BJ (cell line): ENCODE measurements at regions of chr3 and their contacts with region 1.

Region 1: GRCh38 chr3:87350364-87351199 is 74.2 kb upstream of the POU1F1 start:
- DNase-seq: no peak
- H3K4me3 ChIP-seq: no peak overlapping the region
- H3K27me3 ChIP-seq: no peaks in the 10 kb centered on the region
- CTCF ChIP-seq: peak; percentile 83

Region 2: DNA sequence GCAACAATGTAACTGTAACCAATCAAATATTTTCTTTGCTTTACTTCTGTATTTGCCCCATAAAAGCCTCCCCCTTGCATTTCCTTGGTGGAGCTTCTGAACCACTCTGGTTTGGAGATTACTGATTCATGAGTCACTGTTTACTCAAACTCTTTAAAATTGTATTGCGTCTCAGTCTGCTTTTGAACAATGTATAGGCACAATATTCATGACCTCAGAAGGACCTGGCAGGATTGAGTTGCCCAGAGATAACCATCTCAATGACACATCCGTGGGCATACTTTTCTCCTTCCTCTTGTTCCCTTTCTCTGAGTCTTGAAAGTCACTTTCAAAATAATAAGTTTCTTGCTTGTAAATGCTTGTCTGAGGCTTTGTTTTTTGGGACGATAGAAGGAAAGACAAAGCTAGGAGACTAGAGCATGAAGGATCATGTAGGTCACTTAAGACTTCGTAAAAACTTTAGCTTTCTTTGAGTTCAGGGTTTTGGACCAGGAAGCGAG is 17.1 kb before region 1 on chr3:
- CTCF ChIA-PET with region 1: interaction called, 24 read pairs
- POLR2A ChIA-PET with region 1: no interaction called
- DNase-seq: peak; percentile 65
- H3K4me3 ChIP-seq: no peak overlapping the region
- H3K27me3 ChIP-seq: no peaks in the 10 kb centered on the region
- CTCF ChIP-seq: no peak

Region 3: GRCh38 chr3:87503900-87504508 is 153.4 kb after region 1 on chr3:
- CTCF ChIA-PET with region 1: interaction called, 28 read pairs
- POLR2A ChIA-PET with region 1: no interaction called
- DNase-seq: peak; percentile 19
- H3K4me3 ChIP-seq: no peak overlapping the region
- H3K27me3 ChIP-seq: no peaks in the 10 kb centered on the region
- CTCF ChIP-seq: peak; percentile 78

Region 4: GRCh38 chr3:87696124-87697013 is 345.8 kb after region 1 on chr3:
- CTCF ChIA-PET with region 1: no interaction called
- POLR2A ChIA-PET with region 1: no interaction called
- DNase-seq: no peak
- H3K4me3 ChIP-seq: no peak overlapping the region
- H3K27me3 ChIP-seq: no peaks in the 10 kb centered on the region
- CTCF ChIP-seq: no peak